ENCODE measurements at regions of chr3 and their contacts with region 1.

Region 1: DNA sequence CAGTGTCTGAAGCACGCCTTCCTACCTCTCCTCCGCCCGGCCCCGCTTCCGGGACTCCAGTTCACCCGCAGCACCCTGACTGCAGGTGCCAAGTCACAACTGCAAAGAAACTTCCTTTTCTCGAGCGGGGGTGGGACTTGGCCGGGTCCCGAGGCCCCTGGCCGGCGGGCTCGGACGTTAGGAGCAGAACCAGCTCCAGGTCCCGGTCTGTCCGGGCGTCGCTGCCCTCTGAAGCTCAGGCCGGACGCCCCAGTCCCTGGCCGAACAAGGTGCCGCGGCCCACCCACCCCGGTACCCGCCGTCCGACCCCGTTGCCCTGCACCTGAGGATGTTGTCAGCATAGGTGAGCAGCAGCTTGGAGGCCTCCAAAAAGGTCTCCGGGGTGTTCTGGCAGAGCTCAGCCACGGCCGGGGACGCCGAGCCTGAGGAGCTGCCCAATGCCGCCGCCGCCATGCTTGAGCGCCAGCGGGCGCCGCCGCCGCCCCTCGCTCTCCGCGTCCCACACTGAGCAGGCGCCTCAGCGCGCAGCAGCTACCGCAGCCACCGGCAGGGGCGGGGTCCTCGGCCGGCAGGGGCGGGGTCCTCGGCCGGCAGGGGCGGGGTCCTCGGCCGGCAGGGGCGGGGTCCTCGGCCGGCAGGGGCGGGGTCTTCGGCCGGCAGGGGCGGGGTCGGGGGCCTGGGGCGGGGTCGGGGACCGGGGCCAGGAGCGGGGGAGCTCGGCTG is at the start of gene NGLY1:
- DNase-seq: peak; percentile 72 to 91 (median 84)
- ATAC-seq: peak; percentile 90
- H3K4me3 ChIP-seq: peak within 1 kb of the TSS; percentile 94 to 97
- H3K4me3 Mint-ChIP-seq: peak within 1 kb of the TSS; percentile 94
- H3K27ac ChIP-seq: peak within 1 kb of the TSS; percentile 84 to 85
- H3K27ac Mint-ChIP-seq: peak within 1 kb of the TSS; percentile 93
- H3K4me1 ChIP-seq: peaks cover 30% of the 10 kb centered on the region
- H3K4me1 Mint-ChIP-seq: peaks cover 52% of the 10 kb centered on the region
- H3K27me3 ChIP-seq: no peaks in the 10 kb centered on the region
- H3K27me3 Mint-ChIP-seq: no peaks in the 10 kb centered on the region
- CTCF ChIP-seq: no peak
- total RNA-seq, gene NGLY1: 51.4 to 57.0 TPM

Region 2: GRCh38 chr3:25744470-25744869 is 38.6 kb before region 1 on chr3:
- CTCF ChIA-PET with region 1: no interaction called
- POLR2A ChIA-PET with region 1: no interaction called
- intact Hi-C with region 1: loop called in 1 of 2 experiments (anchors 5 kb)
- DNase-seq: no peak
- ATAC-seq: no peak
- H3K4me3 ChIP-seq: no peak overlapping the region
- H3K4me3 Mint-ChIP-seq: no peak overlapping the region
- H3K27ac ChIP-seq: no peak overlapping the region
- H3K27ac Mint-ChIP-seq: no peak overlapping the region
- H3K4me1 ChIP-seq: no peaks in the 10 kb centered on the region
- H3K4me1 Mint-ChIP-seq: peaks cover 20% of the 10 kb centered on the region
- H3K27me3 ChIP-seq: no peaks in the 10 kb centered on the region
- H3K27me3 Mint-ChIP-seq: no peaks in the 10 kb centered on the region
- CTCF ChIP-seq: no peak

Region 3: DNA sequence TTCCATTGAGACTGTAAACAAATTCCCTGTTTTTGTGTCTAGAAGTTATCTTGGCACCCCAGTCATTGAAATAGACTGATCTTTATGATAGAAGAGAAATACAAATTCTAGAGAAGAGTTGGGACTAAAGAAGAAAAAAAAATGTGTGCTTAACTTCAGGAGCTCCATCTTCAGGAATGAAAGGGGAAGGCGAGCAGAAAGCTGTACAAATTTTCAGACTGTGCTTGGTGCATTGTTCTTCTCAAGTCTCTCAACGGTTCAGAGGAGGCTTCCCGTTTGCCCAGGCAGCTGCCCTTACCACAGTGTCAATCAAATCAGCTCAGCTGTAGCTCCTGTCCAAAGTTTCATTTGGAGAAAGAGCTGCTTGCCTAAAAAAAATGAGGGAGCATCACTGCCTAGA is 48.5 kb after region 1 on chr3:
- CTCF ChIA-PET with region 1: no interaction called
- POLR2A ChIA-PET with region 1: no interaction called
- intact Hi-C with region 1: no loop called
- DNase-seq: peak in 1 of 9 experiments; percentile 13
- ATAC-seq: no peak
- H3K4me3 ChIP-seq: no peak overlapping the region
- H3K4me3 Mint-ChIP-seq: no peak overlapping the region
- H3K27ac ChIP-seq: no peak overlapping the region
- H3K27ac Mint-ChIP-seq: no peak overlapping the region
- H3K4me1 ChIP-seq: peaks cover 2% of the 10 kb centered on the region
- H3K4me1 Mint-ChIP-seq: peaks cover under 1% of the 10 kb centered on the region
- H3K27me3 ChIP-seq: no peaks in the 10 kb centered on the region
- H3K27me3 Mint-ChIP-seq: peaks cover 4% of the 10 kb centered on the region
- CTCF ChIP-seq: no peak